Activated CD8-positive, alpha-beta T cell treated with anti-CD3 and anti-CD28 coated beads, Interleukin-2, amount 10 ng/mL, durations not matched to agents 7 days and 5 days (primary cell): ENCODE measurements at regions of chr2 and their contacts with region 1.

Region 1: GRCh38 chr2:130391058-130391871 is 35.4 kb downstream of the PTPN18 start:
- DNase-seq: peak; percentile 80
- ATAC-seq: peak; percentile 99
- H3K4me3 Mint-ChIP-seq: peak overlapping the region; percentile 86
- H3K27ac Mint-ChIP-seq: peak overlapping the region; percentile 91
- H3K4me1 Mint-ChIP-seq: peaks cover 21% of the 10 kb centered on the region
- H3K27me3 Mint-ChIP-seq: peaks cover 23% of the 10 kb centered on the region

Region 2: DNA sequence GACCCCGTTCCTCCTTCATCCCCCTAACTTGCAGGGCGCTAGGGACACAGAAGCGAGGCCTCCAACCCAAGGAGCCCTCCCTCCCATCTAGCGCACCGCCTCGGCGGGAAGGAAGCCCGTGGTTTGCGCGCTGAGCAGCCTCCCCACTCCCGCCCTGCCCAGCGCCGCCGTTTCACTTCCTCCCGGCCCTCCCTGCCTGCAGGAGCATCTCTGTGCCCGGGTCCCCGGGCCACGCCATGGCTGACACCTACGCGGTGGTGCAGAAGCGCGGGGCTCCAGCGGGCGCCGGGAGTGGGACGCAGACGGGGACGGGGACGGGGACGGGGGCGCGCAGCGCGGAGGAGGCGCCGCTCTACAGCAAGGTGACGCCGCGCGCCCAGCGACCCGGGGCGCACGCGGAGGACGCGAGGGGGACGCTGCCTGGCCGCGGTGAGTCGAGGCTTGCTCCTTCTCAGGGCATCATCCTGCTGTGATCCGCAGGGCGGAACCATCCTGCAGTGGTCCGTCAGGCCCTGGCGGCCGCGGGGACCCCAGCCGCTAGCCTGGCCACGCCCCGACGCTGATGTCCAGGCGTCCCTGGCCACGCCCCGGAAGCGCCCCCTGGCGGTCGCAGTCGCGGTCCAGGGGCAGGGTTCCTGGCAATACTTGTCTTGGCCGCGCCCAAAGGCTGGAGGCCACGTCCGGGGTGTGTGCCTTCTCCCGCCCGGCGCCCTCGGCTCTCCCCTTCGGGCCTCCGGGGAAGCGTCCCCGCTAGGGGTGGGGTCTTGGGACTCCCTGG is 19.0 kb before region 1 on chr2:
- CTCF ChIA-PET with region 1: interaction called, 14 read pairs
- POLR2A ChIA-PET with region 1: interaction called, 20 read pairs
- DNase-seq: peak; percentile 83
- ATAC-seq: peak; percentile 66
- H3K4me3 Mint-ChIP-seq: peak overlapping the region; percentile 81
- H3K27ac Mint-ChIP-seq: peak overlapping the region; percentile 93
- H3K4me1 Mint-ChIP-seq: peaks cover 71% of the 10 kb centered on the region
- H3K27me3 Mint-ChIP-seq: peaks cover 12% of the 10 kb centered on the region